ENCODE measurements at regions of chr21 and their contacts with region 1.

Region 1: GRCh38 chr21:14229399-14229798 is 13.4 kb downstream of the RBM11 start:
- DNase-seq: no peak
- H3K4me3 ChIP-seq: no peak overlapping the region
- H3K27ac ChIP-seq: no peak overlapping the region
- H3K27me3 ChIP-seq: peaks cover 0 to 3% (median 0%) of the 10 kb centered on the region in 45 donors
- CTCF ChIP-seq: no peak

Region 2: DNA sequence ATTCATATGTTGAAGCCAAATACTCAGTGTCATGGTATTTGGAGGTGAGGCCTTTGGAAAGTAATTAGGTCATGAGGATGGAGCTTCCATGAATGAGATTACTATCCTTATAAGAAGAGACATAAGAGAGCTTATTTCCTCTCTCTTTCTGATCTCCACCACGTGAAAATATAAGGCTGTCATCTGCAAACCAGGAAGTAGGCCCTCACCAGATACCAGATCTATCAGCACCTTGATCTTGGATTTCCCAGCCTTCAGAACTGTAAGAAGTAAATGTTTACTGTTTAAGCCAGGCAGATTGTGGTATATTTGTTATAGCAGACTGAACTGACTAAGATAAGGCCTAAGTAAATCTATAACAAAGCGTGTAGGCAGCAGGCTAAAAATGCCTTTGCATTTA is 11.9 kb after region 1 on chr21:
- intact Hi-C with region 1: loop called in 1 of 2 experiments (anchors 1 kb)
- DNase-seq: no peak
- H3K4me3 ChIP-seq: no peak overlapping the region
- H3K27ac ChIP-seq: no peak overlapping the region
- H3K27me3 ChIP-seq: no peaks in the 10 kb centered on the region
- CTCF ChIP-seq: no peak